Spleen (tissue), 13 donors: ENCODE measurements at regions of chr6 and their contacts with region 1.

Region 1: DNA sequence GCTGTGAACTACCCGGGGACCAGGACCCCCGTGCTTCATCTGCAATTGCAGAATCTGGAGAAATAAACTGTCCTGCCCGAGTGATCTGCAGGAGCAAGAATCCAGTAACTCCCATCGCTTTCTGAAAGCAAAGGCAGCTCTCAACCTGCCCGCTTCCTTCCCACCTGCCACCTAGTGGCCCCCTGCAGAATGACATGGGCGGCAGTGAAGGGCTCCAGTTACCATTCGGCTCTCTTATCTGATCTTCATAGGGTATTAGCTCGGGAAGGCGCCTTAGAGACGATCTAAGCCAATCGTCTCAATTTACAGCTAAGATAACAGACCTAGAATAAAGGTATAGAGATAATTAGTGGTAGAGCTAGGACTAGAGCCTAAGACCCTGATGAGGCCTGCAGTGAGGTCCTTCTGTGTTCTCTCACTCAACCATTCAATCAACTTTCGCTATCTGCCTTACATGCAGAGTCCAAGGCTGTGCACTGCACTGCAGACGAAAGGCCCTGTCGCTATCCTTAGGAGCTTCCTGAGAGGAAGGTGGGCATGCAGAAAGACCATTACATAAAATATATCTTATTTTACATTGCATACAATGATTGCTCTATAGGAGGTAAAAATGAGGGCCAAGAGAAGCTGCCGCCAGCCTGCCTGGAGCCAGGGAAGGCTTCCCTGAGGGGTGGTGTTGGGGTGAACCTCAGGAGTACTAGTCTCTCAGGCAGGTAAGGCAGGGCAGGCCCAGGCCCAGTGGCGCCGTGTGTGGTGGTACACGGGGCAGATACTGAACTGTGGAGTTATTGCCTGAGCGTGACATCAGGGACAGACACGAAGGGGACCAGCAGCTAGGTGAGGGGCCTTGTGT is 7.1 kb upstream of the PSMG4 start:
- DNase-seq: peak; percentile 92
- H3K4me3 ChIP-seq: peak overlapping the region in 2 of 8 donors; percentile 4 to 25
- H3K27ac ChIP-seq: no peak overlapping the region
- H3K4me1 ChIP-seq: peaks cover 7 to 14% (median 9%) of the 10 kb centered on the region in 6 donors
- H3K27me3 ChIP-seq: peaks cover 0 to 45% (median 15%) of the 10 kb centered on the region in 7 donors
- CTCF ChIP-seq: peak; percentile 92 to 98 (median 96)
- POLR2A ChIP-seq: no peak

Region 2: GRCh38 chr6:2917065-2917464 is 334.6 kb before region 1 on chr6:
- intact Hi-C with region 1: no loop called
- DNase-seq: no peak
- H3K4me3 ChIP-seq: no peak overlapping the region
- H3K27ac ChIP-seq: peak overlapping the region in 1 of 8 donors; percentile 13
- H3K4me1 ChIP-seq: peaks cover 4 to 23% (median 11%) of the 10 kb centered on the region in 6 donors
- H3K27me3 ChIP-seq: no peaks in the 10 kb centered on the region
- CTCF ChIP-seq: peak in 1 of 11 experiments; percentile 25
- POLR2A ChIP-seq: no peak

Region 3: GRCh38 chr6:3124667-3125066 is 127.0 kb before region 1 on chr6:
- intact Hi-C with region 1: loop called (anchors 5 kb)
- DNase-seq: no peak
- H3K4me3 ChIP-seq: no peak overlapping the region
- H3K27ac ChIP-seq: no peak overlapping the region
- H3K4me1 ChIP-seq: peaks cover 0 to 19% (median 3%) of the 10 kb centered on the region in 6 donors
- H3K27me3 ChIP-seq: no peaks in the 10 kb centered on the region
- CTCF ChIP-seq: no peak
- POLR2A ChIP-seq: no peak

Region 4: DNA sequence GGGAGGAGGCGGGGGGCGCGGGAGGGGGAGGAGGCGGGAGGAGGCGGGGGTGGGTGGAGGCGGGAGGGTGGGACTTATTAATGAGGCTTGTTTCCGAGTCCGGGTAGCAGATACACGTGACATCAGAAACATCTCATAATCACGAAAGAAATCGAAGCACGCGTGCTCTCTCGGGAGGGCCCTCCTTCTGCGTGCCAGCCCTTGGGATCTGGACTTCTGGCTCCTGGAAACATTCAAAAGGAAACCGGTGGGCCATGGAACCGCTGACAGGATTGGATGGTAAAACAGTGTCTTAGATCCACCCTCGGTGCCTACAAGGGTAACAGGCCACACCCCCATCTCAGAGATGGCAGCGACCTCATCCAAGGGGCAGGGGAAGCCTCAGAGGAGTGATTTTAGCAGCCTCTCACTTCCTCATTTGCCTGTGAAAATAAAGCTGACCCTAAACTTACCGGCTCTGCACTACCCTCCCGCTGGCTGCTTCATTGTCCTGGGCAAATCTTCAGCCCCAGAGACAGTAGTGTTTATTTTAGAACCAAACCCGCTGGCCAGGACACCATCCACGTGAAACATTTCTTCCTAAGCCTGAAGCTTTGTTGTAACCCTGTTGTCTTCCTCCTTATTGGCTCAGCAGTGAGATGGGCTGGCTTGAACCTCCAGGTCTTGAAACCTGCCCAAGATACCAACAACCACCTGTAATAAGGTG is 104.5 kb after region 1 on chr6:
- intact Hi-C with region 1: no loop called
- DNase-seq: peak; percentile 92
- H3K4me3 ChIP-seq: peak overlapping the region in 7 of 8 donors; percentile 17 to 71 (median 34)
- H3K27ac ChIP-seq: peak overlapping the region; percentile 73 to 94 (median 88)
- H3K4me1 ChIP-seq: peaks cover 6 to 52% (median 34%) of the 10 kb centered on the region in 6 donors
- H3K27me3 ChIP-seq: no peaks in the 10 kb centered on the region
- CTCF ChIP-seq: no peak
- POLR2A ChIP-seq: no peak

Region 5: DNA sequence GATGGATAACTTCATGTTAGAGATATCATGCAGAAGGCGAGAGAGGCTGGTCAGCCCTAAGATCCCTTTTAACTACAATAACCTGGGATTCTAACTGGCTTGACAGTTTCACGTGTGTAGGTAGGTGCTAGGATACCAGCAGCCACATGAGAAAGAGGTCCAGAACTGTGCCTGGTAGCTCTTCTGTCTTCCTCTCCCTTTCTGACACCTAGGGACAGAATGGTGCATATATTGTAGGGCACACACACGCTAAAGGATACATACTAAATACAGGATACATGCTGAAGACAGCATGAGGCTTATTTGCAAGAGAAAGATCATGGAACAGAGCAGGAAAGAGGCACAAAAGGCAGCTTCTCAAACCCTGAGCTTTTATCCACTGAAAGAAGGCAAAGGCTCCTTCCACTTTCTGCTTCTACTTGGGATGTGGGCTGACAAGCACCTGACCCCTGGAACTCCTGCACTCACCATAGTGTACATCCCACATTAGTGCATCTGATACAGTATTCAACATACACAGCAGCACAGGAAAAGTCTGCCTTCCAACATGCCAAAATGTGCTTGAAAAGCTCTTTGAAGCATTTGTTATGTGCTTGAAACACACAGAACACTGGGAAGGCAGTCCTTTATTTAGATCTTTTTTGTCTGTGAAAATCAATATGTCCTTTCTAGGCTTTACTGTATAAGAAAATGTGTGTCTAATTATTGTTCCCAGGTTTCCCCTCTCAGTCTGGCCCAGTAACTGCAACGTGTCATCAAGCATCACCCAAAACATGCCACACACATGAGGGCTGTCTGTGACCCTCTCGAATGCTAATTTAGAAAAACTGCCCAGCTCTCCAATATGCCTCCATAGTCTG is 202.0 kb after region 1 on chr6:
- intact Hi-C with region 1: no loop called
- DNase-seq: no peak
- H3K4me3 ChIP-seq: peak overlapping the region in 1 of 8 donors; percentile 76
- H3K27ac ChIP-seq: no peak overlapping the region
- H3K4me1 ChIP-seq: peaks cover 6 to 36% (median 26%) of the 10 kb centered on the region in 6 donors
- H3K27me3 ChIP-seq: peaks cover 0 to 85% (median 47%) of the 10 kb centered on the region in 7 donors
- CTCF ChIP-seq: no peak
- POLR2A ChIP-seq: no peak